Gastrocnemius medialis (tissue), 4 donors: ENCODE measurements at regions of chr17 and their contacts with region 1.

Region 1: DNA sequence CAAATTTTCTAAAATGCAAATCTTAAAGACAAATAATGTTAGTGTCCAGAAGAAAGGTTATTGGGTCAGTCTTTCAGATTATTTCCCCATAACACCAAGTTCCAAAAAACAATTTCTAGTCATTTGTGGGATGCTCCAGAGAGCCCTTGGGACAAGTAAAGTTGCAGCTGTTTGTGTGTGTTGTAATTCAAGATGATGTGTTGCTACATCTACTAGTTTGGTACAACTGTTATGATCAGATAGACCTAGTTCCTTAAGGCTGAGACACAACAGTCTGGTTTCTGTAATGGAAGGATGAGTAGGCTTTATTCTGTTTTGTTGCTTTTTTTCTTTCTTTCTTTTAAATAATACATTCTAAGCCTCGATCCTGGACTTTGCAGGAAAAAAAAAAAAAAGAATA is 41.9 kb downstream of the PIGL start:
- DNase-seq: peak; percentile 18 to 43
- ATAC-seq: peak; percentile 87 to 95
- H3K4me3 ChIP-seq: no peak overlapping the region
- H3K27ac ChIP-seq: peak overlapping the region; percentile 74 to 90 (median 85)
- H3K4me1 ChIP-seq: peaks cover 50 to 56% of the 10 kb centered on the region in 2 donors
- H3K27me3 ChIP-seq: no peaks in the 10 kb centered on the region
- CTCF ChIP-seq: no peak
- POLR2A ChIP-seq: no peak

Region 2: GRCh38 chr17:15963670-15964148 is 295.2 kb before region 1 on chr17:
- in situ Hi-C with region 1: no loop called
- intact Hi-C with region 1: no loop called
- DNase-seq: no peak
- ATAC-seq: no peak
- H3K4me3 ChIP-seq: no peak overlapping the region
- H3K27ac ChIP-seq: no peak overlapping the region
- H3K4me1 ChIP-seq: no peaks in the 10 kb centered on the region
- H3K27me3 ChIP-seq: no peaks in the 10 kb centered on the region
- CTCF ChIP-seq: no peak
- POLR2A ChIP-seq: no peak

Region 3: GRCh38 chr17:16215273-16215964 is 43.5 kb before region 1 on chr17 and contains the start of gene NCOR1:
- in situ Hi-C with region 1: no loop called
- intact Hi-C with region 1: loop called (anchors 2 kb)
- DNase-seq: peak; percentile 87 to 90
- ATAC-seq: peak; percentile 88 to 89
- H3K4me3 ChIP-seq: peak within 1 kb of the TSS; percentile 87 to 100 (median 94)
- H3K27ac ChIP-seq: peak within 1 kb of the TSS; percentile 93 to 97 (median 96)
- H3K4me1 ChIP-seq: peaks cover 47% of the 10 kb centered on the region in 2 donors
- H3K27me3 ChIP-seq: no peaks in the 10 kb centered on the region
- CTCF ChIP-seq: peak in 2 of 5 experiments; percentile 47 to 49
- POLR2A ChIP-seq: peak; percentile 76 to 79
- total RNA-seq, gene NCOR1: 122 to 152 (median 132) TPM

Region 4: GRCh38 chr17:16313139-16314090 is 54.5 kb after region 1 on chr17:
- in situ Hi-C with region 1: no loop called
- intact Hi-C with region 1: no loop called
- DNase-seq: no peak
- ATAC-seq: no peak
- H3K4me3 ChIP-seq: no peak overlapping the region
- H3K27ac ChIP-seq: no peak overlapping the region
- H3K4me1 ChIP-seq: no peaks in the 10 kb centered on the region
- H3K27me3 ChIP-seq: no peaks in the 10 kb centered on the region
- CTCF ChIP-seq: no peak
- POLR2A ChIP-seq: no peak